ENCODE measurements at regions of chr9 and their contacts with region 1.

Region 1: GRCh38 chr9:13279284-13280141 is at the start of gene MPDZ:
- DNase-seq: peak; percentile 47
- H3K4me3 ChIP-seq: peak within 1 kb of the TSS; percentile 50 to 54
- H3K27ac ChIP-seq: peak within 1 kb of the TSS; percentile 90 to 96
- H3K4me1 ChIP-seq: no peaks in the 10 kb centered on the region
- H3K27me3 ChIP-seq: no peaks in the 10 kb centered on the region
- CTCF ChIP-seq: peak in 2 of 4 experiments; percentile 13 to 27
- POLR2A ChIP-seq: peak; percentile 44
- total RNA-seq, gene MPDZ: 26.9 to 61.5 TPM

Region 2: GRCh38 chr9:13100914-13101572 is 178.5 kb before region 1 on chr9:
- intact Hi-C with region 1: loop called (anchors 5 kb)
- DNase-seq: no peak
- H3K4me3 ChIP-seq: no peak overlapping the region
- H3K27ac ChIP-seq: no peak overlapping the region
- H3K4me1 ChIP-seq: no peaks in the 10 kb centered on the region
- H3K27me3 ChIP-seq: no peaks in the 10 kb centered on the region
- CTCF ChIP-seq: no peak
- POLR2A ChIP-seq: no peak

Region 3: GRCh38 chr9:13151489-13151888 is 128.0 kb before region 1 on chr9:
- intact Hi-C with region 1: loop called (anchors 10 kb)
- DNase-seq: no peak
- H3K4me3 ChIP-seq: no peak overlapping the region
- H3K27ac ChIP-seq: no peak overlapping the region
- H3K4me1 ChIP-seq: no peaks in the 10 kb centered on the region
- H3K27me3 ChIP-seq: no peaks in the 10 kb centered on the region
- CTCF ChIP-seq: no peak
- POLR2A ChIP-seq: no peak

Region 4: GRCh38 chr9:13410566-13411031 is 131.1 kb after region 1 on chr9:
- intact Hi-C with region 1: loop called (anchors 10 kb)
- DNase-seq: peak; percentile 56
- H3K4me3 ChIP-seq: no peak overlapping the region
- H3K27ac ChIP-seq: no peak overlapping the region
- H3K4me1 ChIP-seq: no peaks in the 10 kb centered on the region
- H3K27me3 ChIP-seq: no peaks in the 10 kb centered on the region
- CTCF ChIP-seq: no peak
- POLR2A ChIP-seq: no peak

Region 5: DNA sequence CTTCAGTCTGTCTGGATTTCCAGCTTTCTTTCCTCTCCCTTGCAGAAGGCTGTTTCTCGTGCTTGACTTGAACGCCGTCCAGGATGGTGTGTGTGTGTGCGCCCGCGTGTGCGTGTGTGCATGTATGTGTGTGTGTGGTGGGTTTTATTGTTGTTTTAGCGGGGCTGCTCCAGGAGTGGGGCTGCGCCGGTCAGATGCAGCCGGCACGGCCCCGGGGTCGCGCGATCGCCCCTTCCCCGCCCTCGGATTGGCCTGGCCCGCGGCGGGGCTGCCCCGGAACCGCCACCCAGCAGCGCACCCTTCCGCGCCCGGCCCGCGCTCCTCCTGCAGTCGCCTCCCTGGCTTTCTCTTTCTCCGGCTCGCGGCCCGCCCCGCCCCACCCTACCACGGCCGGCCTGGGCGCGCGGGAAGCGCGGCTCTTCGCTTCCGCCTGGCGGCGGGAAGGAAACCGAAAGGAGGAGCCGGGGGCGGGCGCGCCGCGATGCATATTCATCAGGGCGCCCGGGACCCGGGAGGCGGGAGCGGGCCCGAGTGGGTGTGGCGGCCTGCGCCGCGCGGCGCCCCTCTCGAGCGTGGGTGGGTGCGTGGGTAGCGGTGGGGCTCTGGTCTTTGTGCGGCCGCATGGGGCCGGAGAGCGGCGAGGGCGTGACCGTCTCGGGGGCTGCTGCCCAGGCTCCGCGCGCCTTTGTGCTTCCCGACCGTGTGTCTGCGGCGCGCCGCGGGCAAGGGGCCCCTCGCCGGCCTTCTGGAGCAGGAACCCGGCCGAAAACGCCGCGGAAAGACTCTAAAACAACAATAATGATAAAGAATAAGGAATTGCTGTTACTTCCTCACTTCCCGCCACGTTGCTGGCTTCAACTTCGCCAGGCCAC is 1042.9 kb after region 1 on chr9:
- intact Hi-C with region 1: loop called (anchors 5 kb)
- DNase-seq: peak; percentile 93
- H3K4me3 ChIP-seq: peak overlapping the region; percentile 59 to 67
- H3K27ac ChIP-seq: peak overlapping the region; percentile 98 to 99
- H3K4me1 ChIP-seq: no peaks in the 10 kb centered on the region
- H3K27me3 ChIP-seq: no peaks in the 10 kb centered on the region
- CTCF ChIP-seq: peak; percentile 46 to 92 (median 58)
- POLR2A ChIP-seq: peak; percentile 70